Activated CD8-positive, alpha-beta memory T cell treated with anti-CD3 and anti-CD28 coated beads, Interleukin-2, amount 10 ng/mL, durations not matched to agents 7 days and 5 days (primary cell): ENCODE measurements at regions of chr1 and their contacts with region 1.

Region 1: DNA sequence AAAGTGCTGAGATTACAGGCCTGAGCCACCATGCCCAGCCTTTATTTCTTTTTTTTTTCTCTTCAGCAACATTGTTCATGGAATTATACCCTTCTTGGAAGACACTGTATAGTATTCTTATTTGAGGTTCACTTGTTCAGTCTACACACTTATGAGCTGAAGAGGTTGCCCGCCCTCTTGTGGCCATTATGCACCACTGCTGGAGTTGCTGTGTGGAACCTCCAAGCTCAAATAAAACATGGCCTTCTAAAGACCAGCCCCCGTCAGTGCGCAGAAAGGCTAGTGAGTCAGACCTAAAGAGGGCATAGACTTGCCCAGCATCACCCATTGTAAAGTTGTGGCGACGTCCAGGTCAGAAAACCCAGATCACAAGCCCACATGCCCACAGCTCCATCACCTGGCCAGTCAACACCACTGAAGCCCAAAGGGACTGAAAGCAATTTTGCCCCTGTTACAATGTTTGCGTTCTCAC is 20.4 kb downstream of the LURAP1 start:
- DNase-seq: peak; percentile 79
- ATAC-seq: peak; percentile 98
- H3K4me3 Mint-ChIP-seq: no peak overlapping the region
- H3K27ac Mint-ChIP-seq: no peak overlapping the region
- H3K4me1 Mint-ChIP-seq: peaks cover 5% of the 10 kb centered on the region
- H3K27me3 Mint-ChIP-seq: no peaks in the 10 kb centered on the region

Region 2: GRCh38 chr1:46036894-46037839 is 186.3 kb before region 1 on chr1:
- CTCF ChIA-PET with region 1: interaction called, 20 read pairs
- DNase-seq: peak; percentile 87
- ATAC-seq: peak; percentile 84
- H3K4me3 Mint-ChIP-seq: no peak overlapping the region
- H3K27ac Mint-ChIP-seq: no peak overlapping the region
- H3K4me1 Mint-ChIP-seq: peaks cover 2% of the 10 kb centered on the region
- H3K27me3 Mint-ChIP-seq: no peaks in the 10 kb centered on the region

Region 3: DNA sequence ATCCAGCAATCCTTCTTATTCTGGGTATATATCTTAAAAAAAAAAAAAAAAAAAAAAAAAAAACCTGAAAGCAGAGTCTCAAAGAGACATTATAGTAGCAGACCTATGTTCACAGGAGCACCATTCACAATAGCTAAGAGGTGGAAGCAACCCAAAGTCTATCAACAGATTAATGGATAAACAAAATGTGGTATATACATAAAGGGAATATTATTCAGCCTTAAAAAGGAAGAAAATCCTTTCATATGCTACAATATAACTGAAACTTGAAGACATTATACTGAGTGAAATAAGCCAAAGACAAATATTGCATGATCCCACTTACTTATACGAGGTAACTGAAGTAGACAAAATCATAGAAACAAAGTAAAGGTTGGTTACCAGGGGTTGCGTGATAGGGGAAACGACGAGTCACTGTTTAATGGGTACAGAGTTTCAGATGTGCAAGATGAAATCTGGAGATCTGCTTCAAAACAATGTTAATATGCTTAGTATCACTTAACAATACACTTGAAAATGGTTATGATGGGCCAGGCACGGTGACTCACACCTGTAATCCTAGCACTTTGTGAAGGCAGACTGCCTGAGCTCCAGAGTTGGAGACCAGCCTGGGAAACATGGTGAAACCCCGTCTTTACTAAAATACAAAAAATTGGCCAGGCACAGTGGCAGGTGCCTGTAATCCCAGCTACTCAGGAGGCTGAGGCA is 120.6 kb before region 1 on chr1:
- CTCF ChIA-PET with region 1: no interaction called
- DNase-seq: no peak
- ATAC-seq: no peak
- H3K4me3 Mint-ChIP-seq: no peak overlapping the region
- H3K27ac Mint-ChIP-seq: no peak overlapping the region
- H3K4me1 Mint-ChIP-seq: peaks cover 6% of the 10 kb centered on the region
- H3K27me3 Mint-ChIP-seq: peaks cover 3% of the 10 kb centered on the region

Region 4: GRCh38 chr1:46132529-46133180 is 90.9 kb before region 1 on chr1 and contains the start of gene PIK3R3:
- CTCF ChIA-PET with region 1: interaction called, 14 read pairs
- DNase-seq: peak; percentile 96
- ATAC-seq: peak; percentile 96
- H3K4me3 Mint-ChIP-seq: peak within 1 kb of the TSS; percentile 83
- H3K27ac Mint-ChIP-seq: peak within 1 kb of the TSS; percentile 91
- H3K4me1 Mint-ChIP-seq: peaks cover 23% of the 10 kb centered on the region
- H3K27me3 Mint-ChIP-seq: peaks cover 52% of the 10 kb centered on the region
- total RNA-seq, gene PIK3R3: 6.7 to 9.6 TPM

Region 5: GRCh38 chr1:46203738-46204405 is 19.6 kb before region 1 on chr1:
- CTCF ChIA-PET with region 1: interaction called, 11 read pairs
- DNase-seq: no peak
- ATAC-seq: no peak
- H3K4me3 Mint-ChIP-seq: peak overlapping the region; percentile 71
- H3K27ac Mint-ChIP-seq: no peak overlapping the region
- H3K4me1 Mint-ChIP-seq: peaks cover 11% of the 10 kb centered on the region
- H3K27me3 Mint-ChIP-seq: no peaks in the 10 kb centered on the region

Region 6: GRCh38 chr1:46236882-46237281 is 13.4 kb after region 1 on chr1:
- CTCF ChIA-PET with region 1: interaction called, 34 read pairs
- DNase-seq: no peak
- ATAC-seq: no peak
- H3K4me3 Mint-ChIP-seq: no peak overlapping the region
- H3K27ac Mint-ChIP-seq: no peak overlapping the region
- H3K4me1 Mint-ChIP-seq: peaks cover 3% of the 10 kb centered on the region
- H3K27me3 Mint-ChIP-seq: peaks cover 2% of the 10 kb centered on the region

Region 7: GRCh38 chr1:46262508-46262907 is 39.0 kb after region 1 on chr1:
- CTCF ChIA-PET with region 1: no interaction called
- DNase-seq: no peak
- ATAC-seq: no peak
- H3K4me3 Mint-ChIP-seq: no peak overlapping the region
- H3K27ac Mint-ChIP-seq: no peak overlapping the region
- H3K4me1 Mint-ChIP-seq: no peaks in the 10 kb centered on the region
- H3K27me3 Mint-ChIP-seq: no peaks in the 10 kb centered on the region

Region 8: GRCh38 chr1:46370214-46370633 is 146.7 kb after region 1 on chr1:
- CTCF ChIA-PET with region 1: no interaction called
- DNase-seq: no peak
- ATAC-seq: no peak
- H3K4me3 Mint-ChIP-seq: no peak overlapping the region
- H3K27ac Mint-ChIP-seq: no peak overlapping the region
- H3K4me1 Mint-ChIP-seq: peaks cover 8% of the 10 kb centered on the region
- H3K27me3 Mint-ChIP-seq: no peaks in the 10 kb centered on the region

Region 9: DNA sequence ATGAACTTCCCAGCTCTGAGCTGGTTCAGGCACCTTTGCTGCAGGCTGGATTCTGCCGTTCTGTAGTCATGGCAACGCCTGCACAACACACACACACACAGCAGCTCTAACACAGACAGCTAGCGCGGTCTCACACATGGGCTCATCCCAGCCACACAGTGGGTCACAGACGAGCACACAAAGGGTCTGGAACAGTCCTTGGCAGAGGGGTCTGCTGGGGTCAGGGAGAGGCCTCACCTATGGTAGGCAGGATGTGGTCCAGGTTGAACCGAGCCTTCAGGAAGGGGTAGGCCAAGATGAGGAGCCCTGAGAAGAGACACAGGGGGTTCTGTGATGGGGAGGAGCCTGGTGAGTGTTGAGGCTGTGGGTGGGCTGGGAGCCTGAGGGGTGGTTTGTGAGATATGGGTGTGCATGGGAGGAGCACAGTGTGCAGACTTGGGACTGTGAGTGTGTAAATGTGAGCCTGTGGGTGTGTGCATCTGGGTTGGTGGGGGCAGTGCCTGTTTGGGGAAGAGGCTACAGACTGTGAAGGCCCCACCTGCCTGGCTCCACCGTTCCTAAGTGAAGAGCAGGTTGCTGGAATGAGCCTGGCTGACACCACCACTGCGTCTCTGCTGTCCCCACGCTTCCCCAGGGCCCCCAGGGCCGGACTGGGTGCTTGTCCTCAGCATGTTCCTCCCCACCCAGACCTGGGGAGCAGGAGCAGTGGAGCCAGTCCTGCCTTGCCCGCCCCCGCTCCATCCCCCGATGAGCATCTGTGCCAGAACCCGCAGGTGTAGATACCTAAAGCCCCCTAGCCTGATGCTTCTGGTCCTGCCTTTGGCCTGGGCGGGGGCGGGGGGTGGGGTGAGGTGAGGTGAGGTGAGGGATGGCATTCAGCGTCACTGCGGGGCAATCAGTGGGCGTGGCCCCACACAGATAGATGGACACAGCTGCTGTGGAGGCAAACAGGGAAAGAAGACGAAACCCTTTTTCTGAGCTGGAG is 326.5 kb after region 1 on chr1:
- CTCF ChIA-PET with region 1: no interaction called
- DNase-seq: peak; percentile 90
- ATAC-seq: peak; percentile 91
- H3K4me3 Mint-ChIP-seq: no peak overlapping the region
- H3K27ac Mint-ChIP-seq: peak overlapping the region; percentile 66
- H3K4me1 Mint-ChIP-seq: peaks cover 21% of the 10 kb centered on the region
- H3K27me3 Mint-ChIP-seq: peaks cover 20% of the 10 kb centered on the region